GM12878 (cell line): ENCODE measurements at regions of chr10 and their contacts with region 1.

Region 1: DNA sequence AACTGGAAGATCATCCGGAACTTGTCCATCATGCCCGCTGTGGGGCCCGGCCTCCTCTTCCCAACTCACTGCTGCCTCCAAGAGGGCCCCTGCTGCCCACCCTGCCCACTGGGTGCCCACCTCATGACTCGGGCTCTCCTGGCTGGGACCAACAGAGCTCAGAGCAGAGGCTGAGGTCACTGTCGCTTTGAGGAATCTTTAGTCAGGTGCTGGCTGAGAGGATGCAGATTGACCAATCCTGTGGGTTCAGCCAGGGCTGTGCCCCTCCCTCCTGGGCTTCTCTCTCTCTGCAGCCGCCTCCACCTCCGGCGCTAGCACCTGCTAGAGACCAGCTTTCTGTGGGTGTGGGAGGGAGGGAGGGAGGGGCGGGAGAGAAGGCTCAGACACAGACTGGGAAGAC is at the start of gene CALHM1:
- DNase-seq: no peak
- ATAC-seq: peak; percentile 93
- H3K4me3 ChIP-seq: no peak within 1 kb of the TSS
- H3K27ac ChIP-seq: no peak within 1 kb of the TSS
- H3K4me1 ChIP-seq: peaks cover 12% of the 10 kb centered on the region
- H3K27me3 ChIP-seq: no peaks in the 10 kb centered on the region
- CTCF ChIP-seq: no peak
- EP300 ChIP-seq: no peak
- POLR2A ChIP-seq: no peak
- RAD21 ChIP-seq: no peak
- polyA plus RNA-seq, gene CALHM1: 0.05 to 0.15 TPM

Region 2: GRCh38 chr10:103181244-103181643 is 277.5 kb before region 1 on chr10:
- CTCF ChIA-PET with region 1: no interaction called
- POLR2A ChIA-PET with region 1: interaction called, 14 read pairs
- RAD21 ChIA-PET with region 1: no interaction called
- SMC1A ChIA-PET with region 1: no interaction called
- in situ Hi-C with region 1: no loop called
- intact Hi-C with region 1: no loop called
- DNase-seq: peak; percentile 45
- ATAC-seq: peak; percentile 83
- H3K4me3 ChIP-seq: no peak overlapping the region
- H3K27ac ChIP-seq: peak overlapping the region; percentile 63
- H3K4me1 ChIP-seq: peaks cover 14% of the 10 kb centered on the region
- H3K27me3 ChIP-seq: no peaks in the 10 kb centered on the region
- CTCF ChIP-seq: no peak
- EP300 ChIP-seq: peak in 1 of 2 experiments; percentile 44; a peak in 1 of 4 replicates
- POLR2A ChIP-seq: no peak
- RAD21 ChIP-seq: no peak